ENCODE measurements at regions of chr10 and their contacts with region 1.

Region 1: DNA sequence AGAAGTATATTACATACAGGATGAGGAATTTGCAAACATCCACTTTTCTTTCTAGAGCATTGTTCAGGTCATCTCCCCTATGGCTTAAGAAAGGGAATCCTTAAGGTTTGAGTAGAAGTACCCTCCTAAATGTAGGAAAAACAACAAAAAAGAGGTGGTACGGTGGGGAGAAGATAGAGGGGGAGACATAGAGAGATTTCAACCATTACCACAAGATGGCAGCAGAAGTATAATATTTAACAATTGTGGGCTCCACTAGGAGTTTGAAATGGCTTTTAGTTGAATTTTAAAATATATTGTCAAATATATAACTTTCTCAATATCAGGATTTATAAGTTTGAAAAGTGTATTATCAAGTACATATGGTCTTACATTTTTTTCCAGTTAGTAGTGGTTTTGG is 72.7 kb upstream of the PRKG1 start:
- DNase-seq: no peak
- ATAC-seq: peak; percentile 79

Region 2: GRCh38 chr10:50946991-50947781 is 54.4 kb before region 1 on chr10:
- intact Hi-C with region 1: no loop called
- DNase-seq: no peak
- ATAC-seq: no peak

Region 3: DNA sequence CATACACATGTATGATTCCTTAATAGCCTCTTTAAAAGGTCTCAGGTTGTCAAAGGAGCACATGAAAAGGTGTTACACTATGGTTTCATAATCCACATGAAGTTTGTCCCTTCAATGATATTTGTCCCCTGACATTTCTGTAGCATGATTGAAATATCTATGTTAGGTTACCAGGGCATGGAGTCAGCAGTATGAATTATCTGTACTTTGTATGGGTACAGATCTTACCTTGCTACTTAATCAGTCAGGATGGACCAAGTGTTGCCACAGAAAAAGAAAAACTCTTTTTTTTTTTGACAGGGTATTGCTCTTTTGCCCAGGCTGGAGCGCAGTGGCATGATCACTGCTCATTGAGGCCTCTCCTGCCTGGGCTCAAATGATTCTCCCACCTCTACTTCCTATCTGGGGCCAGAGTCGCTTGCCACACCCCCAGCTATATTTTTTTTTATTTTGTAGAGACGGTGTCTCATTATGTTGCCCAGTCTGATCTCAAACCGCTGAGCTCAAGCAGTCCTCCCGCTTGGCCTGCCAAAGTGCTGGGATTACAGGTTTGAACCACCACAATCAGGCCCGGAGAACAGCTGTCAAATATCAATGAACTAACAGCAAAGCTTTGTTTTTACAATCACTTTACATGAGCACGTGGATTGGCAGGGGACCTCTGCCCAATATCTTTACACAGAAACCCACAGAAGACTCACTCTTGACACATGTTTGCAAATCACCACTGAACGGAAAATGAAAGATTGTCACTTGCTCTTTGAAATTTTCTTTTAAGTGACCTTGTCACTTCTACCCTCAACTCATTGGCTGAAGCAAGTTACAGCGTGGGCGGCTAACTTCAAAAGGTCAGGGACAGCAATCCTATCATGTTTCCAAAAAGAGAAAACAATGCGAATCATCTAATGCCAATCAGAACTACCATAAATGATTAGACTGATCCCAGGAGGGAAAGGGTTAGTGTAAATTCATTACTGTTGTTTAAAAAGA is 212.9 kb after region 1 on chr10:
- intact Hi-C with region 1: no loop called
- DNase-seq: peak; percentile 40
- ATAC-seq: peak; percentile 53

Region 4: GRCh38 chr10:52215745-52216361 is 1214.3 kb after region 1 on chr10:
- intact Hi-C with region 1: loop called (anchors 5 kb)
- DNase-seq: no peak
- ATAC-seq: peak; percentile 72